ENCODE measurements at regions of chr10 and their contacts with region 1.

Region 1: GRCh38 chr10:73167783-73168464 is at the starts of genes ECD and FAM149B1:
- DNase-seq: peak; percentile 91
- H3K4me3 Mint-ChIP-seq: peak within 1 kb of the TSS; percentile 99
- H3K27ac Mint-ChIP-seq: peak within 1 kb of the TSS; percentile 99
- H3K4me1 Mint-ChIP-seq: peaks cover 42% of the 10 kb centered on the region
- H3K27me3 Mint-ChIP-seq: no peaks in the 10 kb centered on the region
- total RNA-seq, gene ECD: 38.0 and 39.5 TPM in 2 replicates
- total RNA-seq, gene FAM149B1: 11.1 and 11.3 TPM in 2 replicates

Region 2: GRCh38 chr10:72354478-72355213 is 813.3 kb before region 1 on chr10 and contains the start of gene DNAJB12:
- intact Hi-C with region 1: loop called (anchors 5 kb)
- DNase-seq: peak; percentile 86
- H3K4me3 Mint-ChIP-seq: peak within 1 kb of the TSS; percentile 97
- H3K27ac Mint-ChIP-seq: peak within 1 kb of the TSS; percentile 96
- H3K4me1 Mint-ChIP-seq: peaks cover 31% of the 10 kb centered on the region
- H3K27me3 Mint-ChIP-seq: peaks cover 2% of the 10 kb centered on the region
- total RNA-seq, gene DNAJB12: 32.4 and 38.0 TPM in 2 replicates

Region 3: GRCh38 chr10:73244866-73245477 is 77.0 kb after region 1 on chr10:
- intact Hi-C with region 1: no loop called
- DNase-seq: no peak
- H3K4me3 Mint-ChIP-seq: peak overlapping the region; percentile 97
- H3K27ac Mint-ChIP-seq: peak overlapping the region; percentile 40
- H3K4me1 Mint-ChIP-seq: peaks cover 52% of the 10 kb centered on the region
- H3K27me3 Mint-ChIP-seq: no peaks in the 10 kb centered on the region

Region 4: DNA sequence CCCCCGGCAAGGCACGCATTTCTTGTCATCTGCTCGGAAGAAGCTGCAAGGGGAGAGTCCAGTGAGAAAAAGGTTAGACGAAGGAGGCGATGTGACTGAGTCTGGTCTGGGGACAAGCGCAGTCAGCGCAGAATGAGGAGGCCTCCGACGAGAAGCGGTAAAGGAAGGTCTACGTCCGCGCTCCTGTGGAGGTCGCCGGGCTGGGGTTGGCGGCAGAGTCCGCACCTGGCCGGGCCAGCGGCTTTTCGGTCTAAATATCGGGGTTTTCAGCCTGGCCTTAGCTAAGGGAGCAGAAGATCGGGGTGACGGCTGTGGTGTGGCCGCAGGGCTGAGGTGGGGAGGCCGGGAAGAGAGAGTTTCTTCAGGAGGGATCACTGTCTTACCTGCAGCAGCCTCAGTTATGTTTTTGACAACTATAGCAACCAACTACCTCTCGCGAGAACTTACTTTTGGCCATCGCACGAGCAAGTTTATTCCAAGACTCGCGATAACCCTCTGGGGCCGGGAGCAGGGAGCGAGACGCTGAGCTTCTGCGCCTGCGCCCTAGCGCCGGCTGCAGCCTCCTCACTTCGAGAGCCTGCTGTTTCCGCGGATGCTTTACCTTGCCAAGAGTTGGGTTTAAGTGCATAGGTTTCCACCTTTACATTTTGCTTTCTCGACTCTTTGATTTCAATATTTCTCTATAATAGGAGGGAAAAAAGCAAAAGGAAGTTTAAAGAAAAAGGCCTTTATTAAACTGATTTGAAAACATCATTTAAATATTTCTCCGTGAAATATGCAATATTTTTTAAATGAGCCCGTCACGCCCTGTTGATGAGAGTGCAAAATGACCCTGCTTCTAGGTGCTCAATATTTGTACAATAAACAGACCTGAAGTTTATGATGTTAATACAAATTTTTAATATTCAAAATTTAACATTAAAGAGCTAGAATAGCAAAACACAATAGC is 190.7 kb after region 1 on chr10 and contains the start of gene CFAP70:
- intact Hi-C with region 1: loop called (anchors 5 kb)
- DNase-seq: peak; percentile 90
- H3K4me3 Mint-ChIP-seq: peak within 1 kb of the TSS; percentile 93
- H3K27ac Mint-ChIP-seq: peak within 1 kb of the TSS; percentile 86
- H3K4me1 Mint-ChIP-seq: peaks cover 20% of the 10 kb centered on the region
- H3K27me3 Mint-ChIP-seq: peaks cover 8% of the 10 kb centered on the region
- total RNA-seq, gene CFAP70: 0.26 and 0.34 TPM in 2 replicates

Region 5: GRCh38 chr10:74008212-74008731 is 840.3 kb after region 1 on chr10:
- intact Hi-C with region 1: no loop called
- DNase-seq: no peak
- H3K4me3 Mint-ChIP-seq: no peak overlapping the region
- H3K27ac Mint-ChIP-seq: no peak overlapping the region
- H3K4me1 Mint-ChIP-seq: peaks cover 44% of the 10 kb centered on the region
- H3K27me3 Mint-ChIP-seq: no peaks in the 10 kb centered on the region

Measured in activated T-helper 1 cell treated with anti-CD3 and anti-CD28 coated beads, Interleukin-12 subunit alpha, Interleukin-12 subunit beta, Interleukin-2, Interleukin-4 antibody, amounts not matched to agents 30 ng/mL and 10 ng/mL and 1 ng/mL, durations not matched to agents 14 hours and 24 hours and 36 hours (primary cell).